ENCODE measurements at regions of chr19 and their contacts with region 1.

Region 1: GRCh38 chr19:42529248-42529764 is 1.0 kb upstream of the CEACAM1 start:
- DNase-seq: peak; percentile 58
- H3K4me3 Mint-ChIP-seq: peak overlapping the region; percentile 84
- H3K27ac Mint-ChIP-seq: peak overlapping the region; percentile 92
- H3K4me1 Mint-ChIP-seq: peaks cover 34% of the 10 kb centered on the region
- H3K27me3 Mint-ChIP-seq: peaks cover 4% of the 10 kb centered on the region

Region 2: DNA sequence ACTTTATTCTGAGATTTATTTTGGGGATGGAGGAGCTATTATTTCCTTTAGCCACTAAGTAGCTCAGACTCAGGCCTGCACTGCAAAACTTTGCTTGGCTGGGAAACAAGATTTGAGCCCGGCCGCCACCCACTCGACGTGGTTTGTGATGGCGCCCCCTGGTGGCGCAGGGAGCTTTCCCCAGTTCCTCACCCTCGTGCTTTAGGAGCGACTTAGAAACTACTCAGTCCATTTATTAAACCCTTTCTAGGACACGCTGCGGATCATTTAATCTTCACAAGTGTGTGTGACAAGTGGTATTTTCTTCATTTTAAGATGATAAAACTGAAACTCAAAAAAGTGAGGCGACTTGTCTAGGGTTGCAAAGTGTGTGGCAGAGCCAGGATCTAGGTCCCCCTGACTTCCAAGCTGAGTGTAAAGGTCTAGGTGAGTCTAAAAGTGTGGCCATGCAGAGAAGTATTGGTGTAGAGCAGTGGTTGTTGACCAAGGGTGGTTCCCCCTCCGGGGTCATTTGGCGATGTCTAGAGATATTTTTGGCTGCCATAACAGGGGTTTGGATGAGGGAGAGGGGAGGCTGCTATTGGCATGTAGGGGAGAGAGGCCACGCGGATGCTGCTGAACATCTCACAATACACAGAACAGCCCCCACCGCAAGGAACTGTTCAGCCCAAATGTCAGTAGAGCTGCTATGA is 88.8 kb before region 1 on chr19:
- intact Hi-C with region 1: loop called (anchors 1 kb)
- DNase-seq: peak; percentile 68
- H3K4me3 Mint-ChIP-seq: no peak overlapping the region
- H3K27ac Mint-ChIP-seq: peak overlapping the region; percentile 4
- H3K4me1 Mint-ChIP-seq: peaks cover 24% of the 10 kb centered on the region
- H3K27me3 Mint-ChIP-seq: no peaks in the 10 kb centered on the region

Region 3: DNA sequence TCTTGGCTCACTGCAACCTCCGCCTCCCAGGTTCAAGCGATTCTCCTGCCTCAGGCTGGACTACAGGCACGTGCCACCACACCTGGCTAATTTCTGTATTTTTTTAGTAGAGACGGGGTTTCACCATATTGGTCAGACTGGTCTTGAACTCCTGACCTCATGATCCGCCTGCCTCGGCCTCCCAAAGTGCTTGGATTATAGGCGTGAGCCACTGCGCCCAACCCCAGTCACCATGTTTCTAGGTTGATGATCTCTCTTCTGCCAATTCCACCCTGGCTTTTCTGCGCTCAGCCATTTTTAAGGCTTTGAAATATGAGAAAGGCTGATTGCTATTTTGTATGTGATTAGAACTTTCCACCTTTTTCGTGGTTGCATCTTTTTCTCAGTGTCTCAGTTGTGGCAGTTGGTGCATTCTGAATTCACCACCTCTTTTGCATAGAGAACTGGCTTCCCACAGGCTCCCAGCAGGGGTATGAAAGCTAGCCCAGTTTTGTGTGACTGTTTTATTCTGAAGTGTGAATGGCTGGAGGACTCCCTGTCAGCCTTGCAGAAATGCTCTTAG is 16.5 kb before region 1 on chr19:
- intact Hi-C with region 1: loop called (anchors 1 kb)
- DNase-seq: no peak
- H3K4me3 Mint-ChIP-seq: no peak overlapping the region
- H3K27ac Mint-ChIP-seq: peak overlapping the region; percentile 75
- H3K4me1 Mint-ChIP-seq: peaks cover 41% of the 10 kb centered on the region
- H3K27me3 Mint-ChIP-seq: peaks cover 2% of the 10 kb centered on the region